ENCODE measurements at regions of chr3 and their contacts with region 1.

Region 1: GRCh38 chr3:169812332-169813235 is at the starts of genes LRRC34 and LRRIQ4:
- DNase-seq: peak; percentile 46 to 79
- ATAC-seq: peak; percentile 65 to 74 (median 71)
- H3K4me3 ChIP-seq: peak within 1 kb of the TSS; percentile 49
- H3K4me3 Mint-ChIP-seq: peak within 1 kb of the TSS; percentile 97
- H3K27ac ChIP-seq: peak within 1 kb of the TSS; percentile 34
- H3K27ac Mint-ChIP-seq: peak within 1 kb of the TSS; percentile 76 to 80
- H3K4me1 ChIP-seq: peaks cover 27% of the 10 kb centered on the region
- H3K4me1 Mint-ChIP-seq: peaks cover 23 to 30% of the 10 kb centered on the region in 2 donors
- H3K27me3 ChIP-seq: no peaks in the 10 kb centered on the region
- H3K27me3 Mint-ChIP-seq: peaks cover 15 to 16% of the 10 kb centered on the region in 2 donors
- CTCF ChIP-seq: no peak
- total RNA-seq, gene LRRC34: 0.45 to 1.0 (median 0.48) TPM
- total RNA-seq, gene LRRIQ4: not detected

Region 2: GRCh38 chr3:169772897-169773828 is 39.4 kb before region 1 on chr3 and contains the start of gene MYNN:
- intact Hi-C with region 1: loop called (anchors 5 kb)
- DNase-seq: peak; percentile 93 to 97
- ATAC-seq: peak; percentile 81 to 95 (median 87)
- H3K4me3 ChIP-seq: peak within 1 kb of the TSS; percentile 99
- H3K4me3 Mint-ChIP-seq: peak within 1 kb of the TSS; percentile 99
- H3K27ac ChIP-seq: peak within 1 kb of the TSS; percentile 100
- H3K27ac Mint-ChIP-seq: peak within 1 kb of the TSS; percentile 100
- H3K4me1 ChIP-seq: no peaks in the 10 kb centered on the region
- H3K4me1 Mint-ChIP-seq: peaks cover 51 to 53% of the 10 kb centered on the region in 2 donors
- H3K27me3 ChIP-seq: no peaks in the 10 kb centered on the region
- H3K27me3 Mint-ChIP-seq: no peaks in the 10 kb centered on the region
- CTCF ChIP-seq: no peak
- total RNA-seq, gene MYNN: 19.5 to 29.9 (median 29.2) TPM

Region 3: GRCh38 chr3:170044795-170045244 is 232.2 kb after region 1 on chr3:
- intact Hi-C with region 1: no loop called
- DNase-seq: no peak
- ATAC-seq: no peak
- H3K4me3 ChIP-seq: no peak overlapping the region
- H3K4me3 Mint-ChIP-seq: no peak overlapping the region
- H3K27ac ChIP-seq: peak overlapping the region; percentile 71
- H3K27ac Mint-ChIP-seq: no peak overlapping the region
- H3K4me1 ChIP-seq: peaks cover 4% of the 10 kb centered on the region
- H3K4me1 Mint-ChIP-seq: peaks cover 3 to 8% of the 10 kb centered on the region in 2 donors
- H3K27me3 ChIP-seq: no peaks in the 10 kb centered on the region
- H3K27me3 Mint-ChIP-seq: no peaks in the 10 kb centered on the region
- CTCF ChIP-seq: no peak

Region 4: DNA sequence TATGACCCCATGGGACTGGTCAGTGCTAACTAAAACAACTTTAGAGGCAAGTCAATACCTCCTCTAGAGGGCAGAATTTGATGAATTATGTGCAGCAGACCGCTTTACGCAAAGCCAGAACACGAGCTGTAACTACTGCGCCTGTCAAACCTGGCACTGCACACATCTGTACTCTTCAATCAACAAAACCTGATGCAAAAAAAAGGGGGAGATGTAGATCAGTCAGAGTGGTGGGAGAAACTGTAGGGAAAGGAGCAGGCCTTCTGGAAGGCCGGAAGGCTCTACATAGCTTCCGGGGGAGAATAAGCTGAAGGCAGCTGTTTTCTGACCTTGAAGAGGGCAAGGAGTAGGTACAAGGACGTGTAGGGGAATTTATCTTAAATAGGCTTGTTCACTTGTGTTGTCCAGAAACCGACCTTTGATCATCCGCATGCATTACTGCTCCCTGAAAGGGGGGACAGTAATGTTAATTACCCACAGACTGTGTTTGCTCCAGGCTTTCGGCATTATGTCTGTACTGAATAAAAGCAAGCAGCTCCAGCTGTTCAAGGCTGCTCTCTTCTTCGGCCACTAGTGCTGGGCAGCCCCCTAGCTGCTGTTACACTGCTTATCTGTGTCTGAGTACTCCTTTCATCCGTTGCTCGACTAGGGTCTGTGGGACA is 266.2 kb after region 1 on chr3:
- intact Hi-C with region 1: no loop called
- DNase-seq: no peak
- ATAC-seq: no peak
- H3K4me3 ChIP-seq: no peak overlapping the region
- H3K4me3 Mint-ChIP-seq: no peak overlapping the region
- H3K27ac ChIP-seq: no peak overlapping the region
- H3K27ac Mint-ChIP-seq: no peak overlapping the region
- H3K4me1 ChIP-seq: no peaks in the 10 kb centered on the region
- H3K4me1 Mint-ChIP-seq: no peaks in the 10 kb centered on the region
- H3K27me3 ChIP-seq: no peaks in the 10 kb centered on the region
- H3K27me3 Mint-ChIP-seq: no peaks in the 10 kb centered on the region
- CTCF ChIP-seq: no peak